ENCODE measurements at regions of chr11 and their contacts with region 1.

Region 1: GRCh38 chr11:44133335-44133946 is 38.0 kb downstream of the EXT2 start:
- DNase-seq: no peak
- H3K4me3 ChIP-seq: no peak overlapping the region
- H3K27ac ChIP-seq: no peak overlapping the region
- H3K4me1 ChIP-seq: peaks cover 13% of the 10 kb centered on the region
- H3K27me3 ChIP-seq: no peaks in the 10 kb centered on the region
- CTCF ChIP-seq: peak; percentile 77

Region 2: GRCh38 chr11:44286268-44286880 is 152.9 kb after region 1 on chr11:
- intact Hi-C with region 1: loop called (anchors 5 kb)
- DNase-seq: no peak
- H3K4me3 ChIP-seq: no peak overlapping the region
- H3K27ac ChIP-seq: no peak overlapping the region
- H3K4me1 ChIP-seq: no peaks in the 10 kb centered on the region
- H3K27me3 ChIP-seq: peaks cover 13% of the 10 kb centered on the region
- CTCF ChIP-seq: peak; percentile 95